B cell (primary cell): ENCODE measurements at regions of chr12 and their contacts with region 1.

Region 1: GRCh38 chr12:101759396-101760047 is 20.3 kb upstream of the SYCP3 start:
- DNase-seq: peak; percentile 62
- ATAC-seq: peak; percentile 72
- H3K4me3 ChIP-seq: no peak overlapping the region
- H3K4me3 Mint-ChIP-seq: no peak overlapping the region
- H3K27ac ChIP-seq: no peak overlapping the region
- H3K27ac Mint-ChIP-seq: no peak overlapping the region
- H3K4me1 ChIP-seq: peaks cover 3% of the 10 kb centered on the region in 2 donors
- H3K4me1 Mint-ChIP-seq: peaks cover 20% of the 10 kb centered on the region
- H3K27me3 ChIP-seq: no peaks in the 10 kb centered on the region
- H3K27me3 Mint-ChIP-seq: no peaks in the 10 kb centered on the region
- CTCF ChIP-seq: peak; percentile 89

Region 2: DNA sequence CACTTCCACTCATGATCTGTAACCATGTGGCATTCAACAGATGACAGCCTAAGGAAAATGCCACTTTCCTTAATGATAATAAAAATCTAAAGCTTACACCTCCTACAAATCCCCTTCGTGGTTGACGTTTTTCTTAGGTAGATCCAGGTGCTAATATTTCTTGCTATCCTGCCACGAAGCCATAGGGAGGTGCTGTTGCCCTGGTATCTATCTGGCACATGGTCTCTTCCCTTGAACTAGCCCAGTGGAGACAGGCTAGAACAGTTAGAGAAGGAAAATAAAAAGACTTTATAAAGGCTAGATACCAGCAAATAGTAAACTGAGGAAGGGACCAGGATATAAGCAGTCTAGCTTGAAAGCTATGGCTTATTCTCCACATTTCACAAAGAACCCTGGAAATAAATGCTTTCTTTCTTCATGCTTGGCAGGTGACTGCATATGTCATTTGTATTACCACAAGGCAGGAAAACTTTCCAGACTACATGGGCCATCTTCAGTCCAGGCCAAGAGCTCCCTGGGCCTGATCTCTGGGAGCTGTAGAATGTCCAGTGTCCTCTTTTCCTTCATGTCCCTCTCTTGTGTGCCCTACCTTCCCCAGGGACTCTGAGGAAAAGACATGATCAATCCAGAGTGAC is 269.1 kb before region 1 on chr12:
- CTCF ChIA-PET with region 1: interaction called, 4 read pairs
- POLR2A ChIA-PET with region 1: no interaction called
- intact Hi-C with region 1: loop called (anchors 2 kb)
- DNase-seq: peak; percentile 48
- ATAC-seq: peak; percentile 69
- H3K4me3 ChIP-seq: no peak overlapping the region
- H3K4me3 Mint-ChIP-seq: no peak overlapping the region
- H3K27ac ChIP-seq: no peak overlapping the region
- H3K27ac Mint-ChIP-seq: no peak overlapping the region
- H3K4me1 ChIP-seq: no peaks in the 10 kb centered on the region
- H3K4me1 Mint-ChIP-seq: no peaks in the 10 kb centered on the region
- H3K27me3 ChIP-seq: no peaks in the 10 kb centered on the region
- H3K27me3 Mint-ChIP-seq: no peaks in the 10 kb centered on the region
- CTCF ChIP-seq: peak; percentile 61

Region 3: DNA sequence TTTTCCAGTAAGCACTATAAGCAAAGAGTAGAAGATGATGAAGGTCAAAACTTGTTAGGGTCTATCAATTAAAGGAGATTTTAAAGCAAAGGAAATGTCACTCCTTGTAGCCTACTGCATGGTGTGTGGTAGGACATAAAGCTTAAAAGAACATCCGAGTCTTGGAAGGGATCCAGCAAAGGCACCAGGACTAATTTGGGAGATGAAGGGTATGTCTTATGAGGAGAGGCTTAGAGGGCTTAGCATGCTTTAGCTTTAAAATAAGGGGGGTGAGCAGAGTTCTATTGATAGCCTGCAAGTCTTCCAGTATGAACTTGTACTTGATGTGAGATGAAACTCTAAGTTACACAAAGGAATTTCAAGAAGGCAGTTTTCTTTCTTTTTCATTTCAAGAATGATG is 176.6 kb before region 1 on chr12:
- CTCF ChIA-PET with region 1: interaction called, 12 read pairs
- POLR2A ChIA-PET with region 1: no interaction called
- intact Hi-C with region 1: no loop called
- DNase-seq: no peak
- ATAC-seq: no peak
- H3K4me3 ChIP-seq: no peak overlapping the region
- H3K4me3 Mint-ChIP-seq: no peak overlapping the region
- H3K27ac ChIP-seq: no peak overlapping the region
- H3K27ac Mint-ChIP-seq: no peak overlapping the region
- H3K4me1 ChIP-seq: no peaks in the 10 kb centered on the region
- H3K4me1 Mint-ChIP-seq: no peaks in the 10 kb centered on the region
- H3K27me3 ChIP-seq: peaks cover 0 to 3% (median 0%) of the 10 kb centered on the region in 4 experiments
- H3K27me3 Mint-ChIP-seq: peaks cover 27% of the 10 kb centered on the region
- CTCF ChIP-seq: no peak

Region 4: DNA sequence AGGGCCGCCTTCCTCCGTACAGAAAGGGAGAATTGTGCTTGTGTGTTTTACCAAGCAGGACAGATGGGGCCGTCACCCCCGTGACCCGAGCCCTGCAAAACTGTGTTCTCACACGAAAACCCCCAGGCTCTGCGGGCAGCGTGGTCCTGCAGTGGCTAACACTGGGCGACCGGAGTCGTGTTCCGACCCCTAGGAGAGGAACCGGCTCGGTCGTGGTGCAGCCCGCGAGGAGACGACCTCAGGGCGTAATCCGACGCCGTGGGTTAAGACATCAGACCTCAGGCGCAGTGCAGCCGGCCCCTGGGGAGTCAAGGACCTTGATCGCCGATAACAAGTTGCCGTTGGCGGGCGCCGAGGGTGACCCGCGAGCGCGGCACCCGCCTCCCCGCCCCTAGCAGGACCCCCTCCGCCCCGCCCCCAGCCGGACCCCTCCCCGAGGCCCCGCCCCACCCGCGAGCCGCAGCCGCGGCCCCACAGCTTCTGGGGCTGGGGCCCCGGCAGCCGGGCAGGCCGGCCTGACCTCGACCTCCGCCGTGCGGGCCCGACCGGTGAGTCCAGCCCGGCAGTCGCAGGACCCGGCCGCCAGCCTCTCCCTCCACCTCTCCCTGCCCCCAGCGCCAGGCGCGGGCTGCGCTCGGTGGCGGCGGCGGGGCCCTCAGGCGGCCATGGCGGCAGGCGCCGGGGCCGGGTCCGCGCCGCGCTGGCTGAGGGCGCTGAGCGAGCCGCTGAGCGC is 62.2 kb before region 1 on chr12 and contains the start of gene CHPT1:
- CTCF ChIA-PET with region 1: interaction called, 10 read pairs
- POLR2A ChIA-PET with region 1: no interaction called
- intact Hi-C with region 1: no loop called
- DNase-seq: peak; percentile 87
- ATAC-seq: peak; percentile 79
- H3K4me3 ChIP-seq: peak within 1 kb of the TSS; percentile 75 to 90 (median 83)
- H3K4me3 Mint-ChIP-seq: peak within 1 kb of the TSS; percentile 99
- H3K27ac ChIP-seq: peak within 1 kb of the TSS; percentile 83 to 88
- H3K27ac Mint-ChIP-seq: peak within 1 kb of the TSS; percentile 98
- H3K4me1 ChIP-seq: peaks cover 26 to 31% of the 10 kb centered on the region in 2 donors
- H3K4me1 Mint-ChIP-seq: peaks cover 61% of the 10 kb centered on the region
- H3K27me3 ChIP-seq: no peaks in the 10 kb centered on the region
- H3K27me3 Mint-ChIP-seq: no peaks in the 10 kb centered on the region
- CTCF ChIP-seq: no peak
- total RNA-seq, gene CHPT1: 215 and 224 TPM in 2 replicates

Region 5: DNA sequence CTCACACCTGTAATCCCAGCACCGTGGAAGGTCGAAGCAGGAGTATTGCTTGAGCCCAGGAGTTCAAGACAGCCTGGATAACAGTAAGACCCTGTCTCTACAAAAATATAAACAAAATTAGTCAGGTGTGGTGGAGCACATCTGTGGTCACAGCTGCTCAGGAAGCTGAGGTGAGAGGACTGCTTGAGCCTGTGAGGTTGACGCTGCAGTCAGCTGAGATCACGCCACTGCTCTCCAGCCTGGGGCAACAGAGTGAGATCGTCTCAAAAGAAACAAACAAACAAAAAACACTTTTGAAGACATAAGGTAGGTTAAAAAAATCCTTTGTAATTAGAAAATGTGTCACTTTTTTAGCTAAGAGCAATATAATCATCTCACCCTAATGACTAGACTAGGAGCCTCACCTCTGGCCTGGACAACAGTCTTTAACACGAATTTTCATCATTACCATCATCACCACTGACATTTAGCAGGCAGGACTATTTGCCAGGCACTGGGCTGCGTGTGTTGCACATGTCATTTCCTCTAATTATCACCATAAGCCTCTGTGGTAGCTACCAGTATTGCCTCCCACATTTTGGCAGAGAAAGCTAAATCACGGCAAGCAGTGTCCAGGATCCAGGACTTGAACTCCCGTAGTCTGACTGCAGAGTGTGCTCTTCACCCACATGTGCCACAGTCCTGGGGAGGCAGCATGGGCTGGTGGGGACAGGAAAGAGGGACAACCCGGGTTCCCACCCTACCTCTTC is 15.6 kb before region 1 on chr12:
- CTCF ChIA-PET with region 1: interaction called, 30 read pairs
- POLR2A ChIA-PET with region 1: interaction called, 6 read pairs
- intact Hi-C with region 1: loop called (anchors 2 kb)
- DNase-seq: peak; percentile 95
- ATAC-seq: peak; percentile 86
- H3K4me3 ChIP-seq: peak overlapping the region in 1 of 5 experiments; percentile 42
- H3K4me3 Mint-ChIP-seq: peak overlapping the region; percentile 48
- H3K27ac ChIP-seq: peak overlapping the region; percentile 94 to 97
- H3K27ac Mint-ChIP-seq: peak overlapping the region; percentile 99
- H3K4me1 ChIP-seq: peaks cover 45 to 50% of the 10 kb centered on the region in 2 donors
- H3K4me1 Mint-ChIP-seq: peaks cover 70% of the 10 kb centered on the region
- H3K27me3 ChIP-seq: no peaks in the 10 kb centered on the region
- H3K27me3 Mint-ChIP-seq: no peaks in the 10 kb centered on the region
- CTCF ChIP-seq: peak; percentile 59

Region 6: GRCh38 chr12:101876861-101877815 is 117.6 kb after region 1 on chr12 and contains the start of gene DRAM1:
- CTCF ChIA-PET with region 1: no interaction called
- POLR2A ChIA-PET with region 1: interaction called, 14 read pairs
- intact Hi-C with region 1: no loop called
- DNase-seq: peak; percentile 90
- ATAC-seq: peak; percentile 87
- H3K4me3 ChIP-seq: peak within 1 kb of the TSS; percentile 80 to 92 (median 86)
- H3K4me3 Mint-ChIP-seq: peak within 1 kb of the TSS; percentile 90
- H3K27ac ChIP-seq: peak within 1 kb of the TSS; percentile 84 to 85
- H3K27ac Mint-ChIP-seq: peak within 1 kb of the TSS; percentile 88
- H3K4me1 ChIP-seq: peaks cover 6 to 14% of the 10 kb centered on the region in 2 donors
- H3K4me1 Mint-ChIP-seq: peaks cover 20% of the 10 kb centered on the region
- H3K27me3 ChIP-seq: no peaks in the 10 kb centered on the region
- H3K27me3 Mint-ChIP-seq: no peaks in the 10 kb centered on the region
- CTCF ChIP-seq: peak; percentile 25
- total RNA-seq, gene DRAM1: 7.9 and 10.2 TPM in 2 replicates